Activated CD4-positive, alpha-beta T cell treated with anti-CD3 and anti-CD28 coated beads for 36 hours (primary cell): ENCODE measurements at regions of chr14 and their contacts with region 1.

Region 1: DNA sequence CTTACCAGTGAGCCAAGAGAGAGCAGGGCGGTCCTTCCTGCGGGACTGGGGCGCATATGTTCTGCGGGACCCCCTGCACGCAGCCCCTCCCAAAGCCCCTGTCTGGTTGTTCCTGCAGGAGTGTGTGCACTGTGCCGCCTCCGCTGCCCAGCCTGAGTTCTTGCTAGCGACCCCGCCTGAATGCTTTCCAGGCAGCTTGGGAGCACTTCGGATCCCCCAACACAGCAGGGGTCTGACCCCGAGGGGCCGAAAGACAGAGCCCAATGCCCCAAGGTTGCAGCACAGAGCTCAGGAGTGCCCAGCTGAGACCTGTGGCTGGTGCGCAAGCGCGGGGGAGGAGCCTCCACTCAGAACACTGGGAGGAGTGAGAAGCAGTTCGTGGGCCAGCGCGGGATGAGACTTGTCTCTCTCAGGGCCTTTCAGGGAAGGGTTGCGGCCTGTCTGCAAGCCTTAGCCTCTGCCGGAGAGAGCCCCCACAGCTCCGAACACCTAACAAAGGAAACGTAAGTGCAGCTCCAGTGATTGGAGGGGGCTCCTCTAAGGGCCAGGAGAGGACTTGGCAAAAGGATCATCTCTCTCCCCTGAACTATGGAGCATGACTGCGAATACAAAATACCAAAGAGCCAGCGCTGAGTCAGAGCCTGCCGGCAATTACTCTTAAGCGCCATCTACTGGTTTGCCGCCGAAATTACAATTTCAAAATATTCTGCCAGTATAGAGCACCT is 50.5 kb downstream of the GTF2A1 start:
- DNase-seq: peak; percentile 94
- ATAC-seq: peak; percentile 98
- H3K4me3 Mint-ChIP-seq: peak overlapping the region; percentile 83
- H3K27ac Mint-ChIP-seq: peak overlapping the region; percentile 92
- H3K4me1 Mint-ChIP-seq: peaks cover 20% of the 10 kb centered on the region
- H3K27me3 Mint-ChIP-seq: no peaks in the 10 kb centered on the region

Region 2: GRCh38 chr14:81120501-81120900 is 49.8 kb before region 1 on chr14:
- CTCF ChIA-PET with region 1: no interaction called
- POLR2A ChIA-PET with region 1: no interaction called
- intact Hi-C with region 1: no loop called
- DNase-seq: no peak
- ATAC-seq: no peak
- H3K4me3 Mint-ChIP-seq: no peak overlapping the region
- H3K27ac Mint-ChIP-seq: no peak overlapping the region
- H3K4me1 Mint-ChIP-seq: peaks cover 4% of the 10 kb centered on the region
- H3K27me3 Mint-ChIP-seq: no peaks in the 10 kb centered on the region

Region 3: DNA sequence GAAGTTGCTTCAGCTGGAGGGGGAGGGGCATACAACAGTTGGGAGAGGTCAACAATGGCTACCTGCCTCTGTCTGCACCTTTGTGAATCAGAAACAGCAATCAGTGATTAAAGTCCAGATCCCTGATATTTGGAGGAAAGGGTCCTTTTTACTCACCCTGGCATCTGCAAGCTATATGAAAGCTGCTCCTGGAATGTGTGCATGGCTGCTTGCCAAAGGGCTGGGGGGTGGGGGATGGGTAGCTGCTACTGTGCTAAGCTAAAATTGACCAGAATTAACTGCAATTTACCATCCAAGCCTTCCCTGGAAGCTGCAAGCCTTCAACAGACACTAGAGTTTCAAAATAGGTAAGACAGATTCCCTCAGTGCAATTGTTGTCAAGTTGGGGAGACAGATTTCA is 64.0 kb after region 1 on chr14:
- CTCF ChIA-PET with region 1: no interaction called
- POLR2A ChIA-PET with region 1: no interaction called
- intact Hi-C with region 1: no loop called
- DNase-seq: no peak
- ATAC-seq: no peak
- H3K4me3 Mint-ChIP-seq: no peak overlapping the region
- H3K27ac Mint-ChIP-seq: no peak overlapping the region
- H3K4me1 Mint-ChIP-seq: peaks cover 4% of the 10 kb centered on the region
- H3K27me3 Mint-ChIP-seq: no peaks in the 10 kb centered on the region

Region 4: DNA sequence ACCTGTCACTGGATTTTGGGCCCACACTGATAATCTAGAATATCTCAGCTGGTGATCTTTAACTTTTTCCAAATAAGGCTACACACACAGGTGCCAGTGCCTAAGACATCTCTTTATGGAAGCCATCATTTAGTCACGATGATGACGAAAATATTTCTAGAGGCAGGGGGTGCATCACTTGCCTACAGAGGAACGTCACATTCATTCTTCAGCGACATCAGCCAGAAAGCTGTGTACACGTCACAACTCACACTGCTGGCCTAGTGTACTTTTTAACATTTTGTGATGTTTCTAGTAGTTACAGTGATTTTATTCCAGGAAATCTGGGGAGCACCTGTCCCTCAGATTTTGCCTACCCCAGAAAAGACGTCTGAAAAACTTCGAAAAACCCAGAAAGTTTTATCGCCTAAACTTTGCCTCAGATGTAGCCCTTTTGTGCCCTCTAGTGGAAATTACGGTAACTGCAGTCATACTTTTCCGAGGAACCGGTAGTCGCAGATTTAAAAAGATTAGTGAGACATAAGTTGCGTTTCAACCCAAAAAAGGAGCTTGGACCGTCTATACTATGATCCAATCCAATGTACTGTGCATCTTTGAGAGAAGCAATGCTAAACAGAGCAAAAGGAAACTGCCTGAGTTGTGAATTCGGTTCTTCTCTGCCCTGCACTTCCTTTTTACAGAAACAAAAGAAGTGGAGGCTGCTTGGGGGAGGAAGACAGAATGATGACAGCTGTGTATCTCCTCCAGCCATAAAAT is 294.2 kb after region 1 on chr14:
- CTCF ChIA-PET with region 1: interaction called, 3 read pairs
- POLR2A ChIA-PET with region 1: no interaction called
- intact Hi-C with region 1: loop called in 1 of 2 experiments (anchors 1 kb)
- DNase-seq: peak; percentile 69
- ATAC-seq: peak; percentile 66
- H3K4me3 Mint-ChIP-seq: peak overlapping the region; percentile 70
- H3K27ac Mint-ChIP-seq: peak overlapping the region; percentile 85
- H3K4me1 Mint-ChIP-seq: peaks cover 7% of the 10 kb centered on the region
- H3K27me3 Mint-ChIP-seq: no peaks in the 10 kb centered on the region